Naive thymus-derived CD8-positive, alpha-beta T cell (primary cell): ENCODE measurements at regions of chr11 and their contacts with region 1.

Region 1: DNA sequence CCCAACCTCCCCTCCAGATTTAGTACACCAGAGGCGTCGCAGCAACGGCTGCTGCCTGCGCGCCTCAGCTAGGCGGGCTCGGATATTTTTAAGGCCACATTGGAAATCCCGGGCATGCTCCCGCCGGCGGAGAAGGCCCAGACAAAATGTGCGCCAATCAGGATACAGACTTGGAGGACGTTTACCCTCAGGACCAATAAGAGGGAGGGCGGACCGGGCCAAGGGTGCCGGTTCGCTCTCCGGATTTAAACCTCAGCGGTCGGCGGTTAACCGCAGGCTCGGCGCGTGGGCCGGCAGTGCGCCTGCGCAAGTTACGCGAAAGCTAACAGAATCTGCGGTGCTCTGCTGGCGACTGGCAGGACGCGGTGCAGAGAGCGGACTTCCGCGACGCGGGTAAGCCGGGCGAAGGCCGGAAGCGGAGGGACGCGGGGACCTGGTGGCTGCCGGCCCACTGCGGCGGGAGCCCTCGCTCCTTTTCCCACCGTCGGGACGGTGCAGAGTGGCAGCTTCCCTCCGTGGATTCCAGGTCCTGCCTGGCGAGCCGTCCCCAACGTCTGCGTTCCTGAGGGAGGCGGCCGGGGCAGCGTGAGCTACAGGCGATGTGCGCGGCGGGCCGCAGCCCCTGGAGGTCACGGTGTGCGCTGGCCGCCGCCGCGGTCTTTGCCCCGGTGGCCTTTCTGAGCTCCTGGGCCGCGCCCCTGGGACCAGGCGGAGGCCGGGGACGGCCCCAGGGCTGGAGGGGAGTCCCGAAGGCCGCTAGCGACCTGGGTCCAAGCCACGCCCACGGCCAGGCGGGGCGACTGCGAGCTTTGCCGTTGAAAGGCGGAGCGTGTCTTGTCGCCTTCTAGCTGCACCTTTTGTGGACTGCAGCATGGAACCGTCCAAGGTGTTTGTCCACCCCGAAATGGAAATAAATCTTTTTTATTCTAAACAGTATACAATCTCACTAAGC is at the start of gene HYLS1:
- DNase-seq: peak; percentile 87 to 99 (median 94)
- ATAC-seq: peak; percentile 90 to 91
- H3K4me3 Mint-ChIP-seq: peak within 1 kb of the TSS; percentile 86 to 97 (median 95)
- H3K27ac Mint-ChIP-seq: peak within 1 kb of the TSS; percentile 92 to 98 (median 96)
- H3K4me1 Mint-ChIP-seq: peaks cover 15 to 34% (median 28%) of the 10 kb centered on the region in 4 donors
- H3K27me3 Mint-ChIP-seq: peaks cover 0 to 3% (median 0%) of the 10 kb centered on the region in 5 donors
- polyA plus RNA-seq, gene HYLS1: 4.1 to 7.5 (median 4.4) TPM

Region 2: GRCh38 chr11:125807909-125808308 is 79.7 kb before region 1 on chr11:
- POLR2A ChIA-PET with region 1: no interaction called
- DNase-seq: no peak
- ATAC-seq: no peak
- H3K4me3 Mint-ChIP-seq: no peak overlapping the region
- H3K27ac Mint-ChIP-seq: no peak overlapping the region
- H3K4me1 Mint-ChIP-seq: no peaks in the 10 kb centered on the region
- H3K27me3 Mint-ChIP-seq: peaks cover 0 to 4% (median 0%) of the 10 kb centered on the region in 5 donors

Region 3: DNA sequence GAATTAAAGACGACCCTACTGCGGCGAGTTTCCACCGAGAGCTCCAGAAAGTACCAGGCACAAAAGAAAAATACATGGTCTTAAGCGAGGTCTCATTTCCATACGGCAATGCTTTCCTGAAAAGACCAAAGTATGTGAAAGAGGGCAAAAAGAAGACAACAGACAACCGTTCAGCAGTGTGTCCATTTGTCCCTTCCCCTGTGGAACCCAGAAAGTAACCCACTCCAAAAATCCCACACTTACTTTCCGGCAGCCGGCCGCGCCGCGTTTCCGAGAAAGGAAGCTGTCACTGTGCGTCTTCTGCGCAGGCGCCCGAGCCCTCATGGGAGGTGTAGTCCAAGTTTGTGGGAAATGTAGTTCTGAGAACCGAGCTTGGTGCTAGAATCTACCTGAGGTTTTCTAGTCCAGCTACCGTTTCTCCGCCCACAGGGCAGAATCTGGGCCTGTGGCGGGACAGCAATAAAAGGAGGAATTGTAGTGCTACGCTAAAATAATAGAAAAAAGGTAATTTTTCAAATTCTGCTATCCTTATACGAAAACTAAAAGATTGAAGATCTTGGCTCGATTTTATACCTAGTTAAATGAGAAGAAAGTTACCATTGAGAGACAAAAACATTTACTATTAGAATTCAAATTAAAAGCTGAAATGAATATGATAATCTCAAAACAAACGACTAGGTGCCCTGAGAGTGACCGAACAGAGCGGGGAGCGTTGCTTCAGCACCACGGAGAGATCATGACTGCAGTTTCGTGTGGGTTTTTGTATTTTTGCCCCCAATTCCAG is 15.5 kb after region 1 on chr11 and contains the start of gene PUS3:
- POLR2A ChIA-PET with region 1: interaction called, 38 read pairs
- DNase-seq: peak; percentile 75 to 91 (median 82)
- ATAC-seq: peak; percentile 88 to 90
- H3K4me3 Mint-ChIP-seq: peak within 1 kb of the TSS; percentile 91 to 97 (median 96)
- H3K27ac Mint-ChIP-seq: peak within 1 kb of the TSS; percentile 86 to 95 (median 93)
- H3K4me1 Mint-ChIP-seq: peaks cover 14 to 46% (median 35%) of the 10 kb centered on the region in 4 donors
- H3K27me3 Mint-ChIP-seq: peaks cover 7 to 35% (median 15%) of the 10 kb centered on the region in 5 donors
- polyA plus RNA-seq, gene PUS3: 9.5 to 16.7 (median 9.8) TPM